Dendritic cell treated with granulocyte-macrophage colony-stimulating factor and Interleukin-4, amounts not matched to agents 40 ng/mL and 50 ng/mL, for 4 days (primary cell): ENCODE measurements at regions of chr4 and their contacts with region 1.

Region 1: DNA sequence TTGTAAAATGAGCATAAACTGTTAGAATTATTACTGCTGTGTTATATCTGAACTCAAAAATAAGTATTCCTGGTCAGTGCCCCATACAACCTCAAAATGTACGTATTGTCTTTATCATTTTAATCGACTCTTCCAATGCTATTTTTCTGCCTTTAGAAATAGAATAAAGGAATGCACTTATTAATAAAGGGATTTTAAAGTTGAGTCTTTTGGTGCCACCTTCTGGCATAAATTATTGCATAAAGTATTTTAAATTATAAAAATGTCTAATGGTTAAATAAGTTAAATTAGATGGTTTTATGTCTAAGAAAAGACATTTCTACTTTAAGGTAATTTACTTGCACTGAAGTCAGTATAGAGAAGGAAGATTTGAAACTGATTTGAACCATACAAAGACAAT is 424.0 kb upstream of the NDST4 start:
- H3K4me3 Mint-ChIP-seq: no peak overlapping the region
- H3K27ac Mint-ChIP-seq: no peak overlapping the region
- H3K4me1 Mint-ChIP-seq: no peaks in the 10 kb centered on the region
- H3K27me3 Mint-ChIP-seq: no peaks in the 10 kb centered on the region

Region 2: DNA sequence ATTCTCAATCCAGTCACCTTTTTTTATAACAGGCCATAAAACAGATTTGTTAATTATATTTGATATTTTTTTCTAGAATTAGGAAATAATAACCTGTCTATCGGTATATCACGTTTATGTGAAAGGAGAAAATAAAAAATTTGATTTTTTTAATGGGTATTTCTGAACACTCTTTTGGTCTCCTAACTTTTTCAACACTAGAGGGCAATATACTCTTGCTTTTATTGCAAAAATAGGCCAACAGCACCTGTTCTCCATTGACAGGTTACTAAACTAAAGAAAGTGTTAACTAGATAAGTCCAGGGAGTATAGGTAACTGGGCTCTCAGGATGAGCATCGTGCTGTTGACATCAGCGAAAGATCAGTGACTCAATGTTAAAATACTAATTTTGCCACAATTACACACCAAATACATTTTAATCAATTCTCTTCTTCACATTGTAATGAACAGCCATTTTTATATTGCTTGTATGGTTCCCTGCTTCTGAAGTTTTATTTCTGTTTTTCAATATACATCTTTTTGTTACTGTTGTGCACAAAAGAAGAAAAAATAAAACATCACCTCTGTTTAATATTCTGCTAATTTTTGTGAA is 446.8 kb before region 1 on chr4:
- intact Hi-C with region 1: loop called (anchors 2 kb)
- H3K4me3 Mint-ChIP-seq: no peak overlapping the region
- H3K27ac Mint-ChIP-seq: no peak overlapping the region
- H3K4me1 Mint-ChIP-seq: no peaks in the 10 kb centered on the region
- H3K27me3 Mint-ChIP-seq: no peaks in the 10 kb centered on the region

Region 3: DNA sequence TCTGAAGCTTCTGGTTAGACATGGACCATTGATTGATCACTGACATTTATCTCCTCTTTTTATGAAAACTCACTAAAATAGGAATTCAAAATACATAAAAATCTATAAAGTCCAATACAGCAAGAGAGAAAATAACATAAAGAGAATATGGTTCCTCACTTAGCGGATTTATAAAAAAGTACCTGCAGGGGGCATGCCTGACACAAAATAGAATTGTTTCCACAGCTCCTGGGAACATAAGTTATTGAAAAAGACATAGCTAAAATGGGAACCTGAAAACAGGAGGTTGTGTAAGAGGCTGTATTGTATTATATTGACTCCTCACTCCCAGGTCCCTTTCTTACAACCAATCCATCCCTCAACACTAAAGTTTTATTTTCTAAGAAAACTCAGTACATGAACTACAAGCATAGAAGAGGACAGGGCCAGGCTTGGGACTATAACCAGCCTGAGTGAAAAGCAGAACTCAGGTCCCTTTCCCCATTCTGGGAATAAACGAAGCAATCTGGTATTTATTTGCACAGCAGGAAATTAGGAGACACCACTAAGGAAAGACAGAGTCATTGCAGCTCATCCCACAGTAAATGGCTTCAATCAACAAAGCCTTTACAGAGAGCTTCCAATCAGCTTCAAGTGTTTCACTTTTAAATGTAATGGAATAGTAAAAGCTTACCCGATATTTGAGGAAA is 302.8 kb before region 1 on chr4:
- intact Hi-C with region 1: loop called (anchors 2 kb)
- H3K4me3 Mint-ChIP-seq: no peak overlapping the region
- H3K27ac Mint-ChIP-seq: no peak overlapping the region
- H3K4me1 Mint-ChIP-seq: peaks cover 8% of the 10 kb centered on the region
- H3K27me3 Mint-ChIP-seq: no peaks in the 10 kb centered on the region